ENCODE measurements at regions of chr1 and their contacts with region 1.

Region 1: GRCh38 chr1:114097109-114097508 is 56.6 kb downstream of the SYT6 start:
- DNase-seq: no peak
- H3K4me3 ChIP-seq: no peak overlapping the region
- H3K4me3 Mint-ChIP-seq: no peak overlapping the region
- H3K27ac ChIP-seq: no peak overlapping the region
- H3K27ac Mint-ChIP-seq: no peak overlapping the region
- H3K4me1 ChIP-seq: peaks cover 17 to 19% of the 10 kb centered on the region in 2 donors
- H3K4me1 Mint-ChIP-seq: peaks cover 19% of the 10 kb centered on the region
- H3K27me3 ChIP-seq: no peaks in the 10 kb centered on the region
- H3K27me3 Mint-ChIP-seq: peaks cover 3 to 8% (median 5%) of the 10 kb centered on the region in 3 donors
- CTCF ChIP-seq: no peak

Region 2: DNA sequence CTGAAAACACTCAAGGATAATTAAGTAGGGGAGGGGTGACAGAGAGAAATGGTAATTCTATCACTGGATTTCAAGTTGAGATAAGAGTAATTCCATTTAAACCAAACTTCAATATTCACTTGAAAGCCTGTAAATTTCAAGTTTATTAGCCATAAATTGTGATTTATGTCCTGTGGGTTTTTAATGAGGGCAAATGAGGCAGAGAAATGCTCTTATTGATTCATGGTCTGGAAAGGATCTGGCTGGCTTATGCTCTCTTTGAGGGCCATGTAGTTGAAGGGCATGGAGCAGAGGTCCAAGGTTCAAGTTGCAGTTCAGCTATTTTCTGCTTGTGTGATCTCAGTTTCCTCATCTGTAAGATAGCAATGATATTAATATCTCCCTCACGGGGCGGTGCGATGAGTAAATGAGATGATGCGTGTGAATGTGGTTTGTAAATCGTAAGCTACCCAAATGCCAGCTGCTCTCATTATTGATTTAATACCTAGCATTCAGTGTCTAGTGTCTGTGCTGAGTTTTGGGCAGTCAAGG is 105.6 kb before region 1 on chr1:
- intact Hi-C with region 1: no loop called
- DNase-seq: no peak
- H3K4me3 ChIP-seq: no peak overlapping the region
- H3K4me3 Mint-ChIP-seq: no peak overlapping the region
- H3K27ac ChIP-seq: no peak overlapping the region
- H3K27ac Mint-ChIP-seq: no peak overlapping the region
- H3K4me1 ChIP-seq: no peaks in the 10 kb centered on the region
- H3K4me1 Mint-ChIP-seq: no peaks in the 10 kb centered on the region
- H3K27me3 ChIP-seq: no peaks in the 10 kb centered on the region
- H3K27me3 Mint-ChIP-seq: peaks cover 2 to 3% (median 2%) of the 10 kb centered on the region in 3 donors
- CTCF ChIP-seq: no peak

Region 3: DNA sequence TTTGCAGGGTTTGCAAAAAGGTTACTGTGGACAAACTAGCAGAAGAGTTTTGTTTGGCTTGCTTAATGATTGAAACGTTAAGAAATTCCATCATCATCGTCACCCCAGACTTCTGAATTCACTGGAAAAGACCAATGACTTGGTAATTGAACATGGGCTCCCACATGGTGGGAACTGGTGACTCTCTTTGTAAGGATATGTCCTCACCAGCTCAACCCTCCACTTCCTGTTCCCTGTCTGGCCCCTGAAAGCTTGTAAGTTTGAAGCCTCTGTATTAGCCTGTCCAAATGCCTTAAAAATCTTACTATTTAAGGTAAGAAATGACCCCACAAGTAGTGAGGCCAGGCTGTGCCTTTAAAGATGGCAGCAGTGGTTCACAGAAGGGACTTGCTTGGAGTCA is 46.9 kb after region 1 on chr1:
- intact Hi-C with region 1: loop called in 1 of 2 experiments (anchors 5 kb)
- DNase-seq: no peak
- H3K4me3 ChIP-seq: no peak overlapping the region
- H3K4me3 Mint-ChIP-seq: no peak overlapping the region
- H3K27ac ChIP-seq: no peak overlapping the region
- H3K27ac Mint-ChIP-seq: no peak overlapping the region
- H3K4me1 ChIP-seq: peaks cover 0 to 6% of the 10 kb centered on the region in 2 donors
- H3K4me1 Mint-ChIP-seq: peaks cover 6% of the 10 kb centered on the region
- H3K27me3 ChIP-seq: no peaks in the 10 kb centered on the region
- H3K27me3 Mint-ChIP-seq: peaks cover 2 to 5% (median 5%) of the 10 kb centered on the region in 3 donors
- CTCF ChIP-seq: no peak

Measured in CD14-positive monocyte (primary cell).